HEK293 (cell line): ENCODE measurements at regions of chr11 and their contacts with region 1.

Region 1: DNA sequence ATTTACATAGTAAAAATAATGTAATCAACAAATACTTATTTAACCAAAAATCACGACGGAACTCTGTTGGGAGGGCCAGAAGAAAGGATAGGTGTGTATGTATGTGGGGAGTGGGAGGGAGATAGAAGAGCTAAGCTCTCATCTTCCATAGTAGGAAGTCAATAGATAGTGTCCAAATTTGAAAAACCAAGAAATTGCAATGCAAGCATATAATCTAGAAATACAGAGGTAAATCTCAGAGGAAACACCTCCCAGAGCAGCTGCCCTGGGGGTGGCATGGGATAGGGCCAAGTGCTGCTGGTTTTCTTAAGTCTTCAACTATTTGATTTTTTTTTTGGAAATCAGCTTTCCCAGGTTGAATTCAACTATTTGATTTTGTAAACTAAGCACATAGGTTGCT is 16.9 kb downstream of the C11orf86 start:
- H3K4me3 ChIP-seq: no peak overlapping the region
- H3K27ac ChIP-seq: no peak overlapping the region
- H3K4me1 ChIP-seq: no peaks in the 10 kb centered on the region
- CTCF ChIP-seq: no peak

Region 2: GRCh38 chr11:66976048-66976467 is 16.0 kb before region 1 on chr11:
- CTCF ChIA-PET with region 1: interaction called, 10 read pairs
- POLR2A ChIA-PET with region 1: interaction called, 3 read pairs
- H3K4me3 ChIP-seq: no peak overlapping the region
- H3K27ac ChIP-seq: no peak overlapping the region
- H3K4me1 ChIP-seq: no peaks in the 10 kb centered on the region
- CTCF ChIP-seq: peak; percentile 56